H1 (cell line): ENCODE measurements at regions of chr7 and their contacts with region 1.

Region 1: DNA sequence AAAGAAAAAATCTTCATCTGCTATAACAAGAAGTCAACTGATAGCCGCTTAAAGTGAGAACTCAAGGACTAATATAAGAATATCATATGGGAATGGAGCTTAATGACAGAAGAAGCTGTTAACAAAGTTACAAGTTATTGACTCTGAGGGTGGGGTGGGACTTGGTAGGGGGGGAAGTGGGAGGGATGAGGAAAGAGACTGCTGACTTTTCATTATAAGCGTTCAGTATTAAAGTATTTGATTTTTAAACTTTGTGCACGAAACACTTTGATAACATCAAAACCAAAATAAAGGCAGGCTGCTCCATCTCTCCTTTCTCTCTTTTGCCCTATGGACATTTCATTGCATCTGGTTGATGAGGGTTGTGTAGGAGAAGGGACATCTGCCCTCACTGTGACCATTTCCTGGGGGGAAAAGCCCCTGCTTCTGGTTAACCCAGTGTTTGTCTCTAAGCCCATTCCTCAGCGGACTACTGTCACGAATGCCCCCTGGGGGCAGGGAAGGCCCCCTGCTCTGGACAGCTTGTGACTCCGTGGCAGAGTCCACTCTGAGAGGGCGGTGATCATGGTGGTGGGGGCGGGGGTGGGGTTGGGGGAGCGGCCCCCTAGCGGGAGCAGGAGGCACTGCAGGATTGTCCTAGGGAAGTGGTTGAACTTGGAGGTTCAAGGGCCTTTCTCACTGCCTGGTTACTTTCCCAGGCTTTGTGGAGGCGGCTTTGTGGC is 17.4 kb downstream of the SLC13A4 start:
- DNase-seq: peak in 1 of 2 experiments; percentile 73
- H3K4me3 ChIP-seq: peak overlapping the region in 1 of 4 experiments; percentile 37; a peak in 1 of 8 replicates
- H3K27ac ChIP-seq: no peak overlapping the region
- H3K4me1 ChIP-seq: peaks cover 0 to 4% (median 2%) of the 10 kb centered on the region in 4 experiments; a peak in 1 of 7 replicates
- H3K27me3 ChIP-seq: no peaks in the 10 kb centered on the region
- CTCF ChIP-seq: peak; percentile 42 to 76 (median 45)
- EP300 ChIP-seq: no peak
- POLR2A ChIP-seq: no peak
- RAD21 ChIP-seq: no peak; a peak in 1 of 4 replicates

Region 2: GRCh38 chr7:135684136-135684535 is 26.4 kb before region 1 on chr7:
- CTCF ChIA-PET with region 1: interaction called, 14 read pairs
- POLR2A ChIA-PET with region 1: no interaction called
- DNase-seq: no peak
- H3K4me3 ChIP-seq: no peak overlapping the region
- H3K27ac ChIP-seq: no peak overlapping the region
- H3K4me1 ChIP-seq: peaks cover 0 to 3% (median 0%) of the 10 kb centered on the region in 4 experiments; a peak in 2 of 7 replicates
- H3K27me3 ChIP-seq: no peaks in the 10 kb centered on the region
- CTCF ChIP-seq: no peak
- EP300 ChIP-seq: no peak
- POLR2A ChIP-seq: no peak
- RAD21 ChIP-seq: no peak

Region 3: DNA sequence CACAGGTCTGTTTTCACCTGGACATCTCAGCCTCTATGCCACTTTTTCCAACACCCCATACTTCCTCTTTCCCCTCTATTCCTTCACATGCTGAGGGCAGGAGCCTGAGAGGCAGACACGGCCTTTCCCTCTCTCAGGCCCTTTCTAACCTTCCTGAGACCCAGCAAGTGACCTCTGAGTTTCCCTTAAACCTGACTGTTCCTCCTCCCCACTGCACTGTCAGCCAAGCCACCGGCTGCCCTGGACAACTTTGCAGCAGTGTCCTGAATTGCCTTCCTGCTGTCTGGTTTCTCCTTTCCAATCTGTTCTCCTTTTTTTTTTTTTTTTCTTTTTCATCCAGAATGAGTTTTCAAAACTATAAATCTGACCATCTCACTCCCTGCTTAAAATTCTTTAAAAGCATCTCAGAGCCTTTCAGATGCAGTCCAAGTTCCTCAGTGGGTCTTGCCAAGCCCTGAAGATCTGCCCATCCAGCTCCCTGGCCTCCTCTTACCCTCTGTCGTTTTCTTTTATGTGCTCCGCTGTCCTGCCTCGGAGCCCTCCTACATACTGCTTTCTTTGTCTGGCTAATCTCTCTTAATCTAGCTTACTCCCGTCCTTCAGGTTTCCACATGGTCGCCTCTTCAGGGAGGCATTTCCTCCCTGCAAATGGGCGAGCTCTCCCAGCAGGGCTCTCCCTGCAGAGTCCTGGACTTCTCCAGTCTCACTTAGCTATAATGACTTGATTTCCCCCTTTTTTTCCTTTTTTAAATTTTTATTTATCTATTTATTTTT is 13.1 kb before region 1 on chr7:
- CTCF ChIA-PET with region 1: interaction called, 78 read pairs
- POLR2A ChIA-PET with region 1: interaction called, 4 read pairs
- DNase-seq: no peak
- H3K4me3 ChIP-seq: no peak overlapping the region
- H3K27ac ChIP-seq: no peak overlapping the region
- H3K4me1 ChIP-seq: no peaks in the 10 kb centered on the region
- H3K27me3 ChIP-seq: no peaks in the 10 kb centered on the region
- CTCF ChIP-seq: no peak
- EP300 ChIP-seq: no peak
- POLR2A ChIP-seq: no peak
- RAD21 ChIP-seq: no peak

Region 4: DNA sequence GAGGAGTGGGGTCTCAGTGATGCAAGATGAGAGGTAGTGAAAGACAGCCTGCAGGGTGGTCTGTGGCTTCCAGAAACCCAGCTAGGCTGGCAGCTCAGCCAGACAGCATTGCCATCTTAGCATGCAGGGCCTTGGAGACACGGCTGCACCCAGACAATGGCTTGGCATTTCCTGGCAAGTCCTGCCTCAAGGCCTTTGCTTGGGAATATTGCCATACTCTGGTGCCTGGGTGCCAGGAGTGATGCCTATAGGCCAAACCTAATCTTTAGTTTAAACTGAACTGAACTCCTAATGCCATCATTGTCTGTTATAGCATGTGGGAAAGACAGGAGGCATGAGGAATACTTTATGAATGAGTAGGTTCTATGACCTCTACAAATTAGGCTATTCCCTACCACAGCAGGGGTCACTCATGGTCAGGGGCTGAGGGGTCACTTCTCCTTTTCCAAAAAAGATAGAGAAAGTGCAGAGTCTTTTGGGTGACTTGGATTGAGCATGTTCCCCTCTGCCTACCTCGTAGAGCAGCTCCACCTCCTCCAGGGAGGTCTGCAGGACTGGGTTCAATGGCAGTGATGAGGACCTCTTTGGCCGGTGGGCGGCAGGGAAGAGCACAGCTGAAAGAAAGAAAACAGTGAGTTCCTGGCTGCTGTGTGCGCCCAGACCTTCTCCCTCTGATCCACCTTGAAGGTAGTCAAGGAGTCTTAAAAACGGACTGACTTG is 26.2 kb after region 1 on chr7:
- CTCF ChIA-PET with region 1: interaction called, 30 read pairs
- POLR2A ChIA-PET with region 1: no interaction called
- DNase-seq: no peak
- H3K4me3 ChIP-seq: no peak overlapping the region
- H3K27ac ChIP-seq: no peak overlapping the region; the same call in 1 of the 2 replicates
- H3K4me1 ChIP-seq: no peaks in the 10 kb centered on the region
- H3K27me3 ChIP-seq: no peaks in the 10 kb centered on the region
- CTCF ChIP-seq: no peak
- EP300 ChIP-seq: no peak
- POLR2A ChIP-seq: no peak
- RAD21 ChIP-seq: no peak

Region 5: GRCh38 chr7:135755351-135755753 is 44.8 kb after region 1 on chr7:
- CTCF ChIA-PET with region 1: interaction called, 12 read pairs
- POLR2A ChIA-PET with region 1: no interaction called
- DNase-seq: no peak
- H3K4me3 ChIP-seq: no peak overlapping the region
- H3K27ac ChIP-seq: no peak overlapping the region
- H3K4me1 ChIP-seq: peaks cover 2 to 20% (median 5%) of the 10 kb centered on the region in 4 experiments; a peak in 5 of 7 replicates
- H3K27me3 ChIP-seq: no peaks in the 10 kb centered on the region
- CTCF ChIP-seq: no peak
- EP300 ChIP-seq: no peak
- POLR2A ChIP-seq: no peak
- RAD21 ChIP-seq: no peak

Region 6: DNA sequence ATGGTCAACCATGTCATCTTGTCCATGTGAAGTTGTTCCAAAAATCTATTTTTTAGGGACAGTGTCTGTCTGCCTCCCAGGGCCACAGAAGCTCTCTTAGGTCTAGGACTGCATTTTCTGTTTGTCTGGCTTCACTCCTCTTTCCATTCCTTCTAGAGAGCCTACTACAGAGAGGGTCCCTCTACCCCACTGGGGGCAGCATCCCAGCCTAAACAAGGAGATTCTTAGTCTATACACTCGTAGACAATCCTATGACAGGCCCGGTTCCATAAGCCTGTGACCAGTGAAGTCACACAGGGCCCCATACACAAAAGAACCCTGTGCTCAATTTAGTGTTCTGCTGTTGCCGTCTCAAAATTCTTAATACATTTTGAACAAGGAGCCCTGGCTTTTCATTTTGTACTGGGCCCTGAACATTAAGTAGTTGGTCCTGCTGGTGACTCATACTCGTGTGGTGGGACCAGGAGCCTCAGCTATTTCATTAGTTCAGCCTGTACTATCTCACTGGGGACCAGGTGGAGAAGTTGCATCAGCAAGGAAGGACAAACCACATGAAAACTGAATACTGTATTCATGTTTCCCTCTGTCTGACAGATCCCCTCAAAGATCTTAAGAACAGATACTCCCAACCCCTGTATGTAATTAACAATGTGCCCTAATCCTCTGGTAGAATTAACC is 61.5 kb after region 1 on chr7:
- CTCF ChIA-PET with region 1: interaction called, 18 read pairs
- POLR2A ChIA-PET with region 1: no interaction called
- DNase-seq: no peak
- H3K4me3 ChIP-seq: no peak overlapping the region
- H3K27ac ChIP-seq: no peak overlapping the region
- H3K4me1 ChIP-seq: peaks cover 0 to 10% (median 0%) of the 10 kb centered on the region in 4 experiments; a peak in 2 of 7 replicates
- H3K27me3 ChIP-seq: no peaks in the 10 kb centered on the region
- CTCF ChIP-seq: no peak
- EP300 ChIP-seq: no peak
- POLR2A ChIP-seq: no peak
- RAD21 ChIP-seq: no peak